GM12878 (cell line): ENCODE measurements at regions of chr3 and their contacts with region 1.

Region 1: GRCh38 chr3:46186471-46187340 is 21.4 kb downstream of the CCR1 start:
- DNase-seq: peak; percentile 87
- ATAC-seq: peak; percentile 94
- H3K4me3 ChIP-seq: 0 out of 2 replicates have a peak overlapping the region, but pooled peaks have one; percentile 6
- H3K27ac ChIP-seq: peak overlapping the region; percentile 71
- H3K4me1 ChIP-seq: peaks cover 33% of the 10 kb centered on the region
- H3K27me3 ChIP-seq: no peaks in the 10 kb centered on the region
- CTCF ChIP-seq: no peak
- EP300 ChIP-seq: peak in 1 of 2 experiments; percentile 54; a peak in 2 of 4 replicates
- POLR2A ChIP-seq: no peak
- RAD21 ChIP-seq: no peak

Region 2: DNA sequence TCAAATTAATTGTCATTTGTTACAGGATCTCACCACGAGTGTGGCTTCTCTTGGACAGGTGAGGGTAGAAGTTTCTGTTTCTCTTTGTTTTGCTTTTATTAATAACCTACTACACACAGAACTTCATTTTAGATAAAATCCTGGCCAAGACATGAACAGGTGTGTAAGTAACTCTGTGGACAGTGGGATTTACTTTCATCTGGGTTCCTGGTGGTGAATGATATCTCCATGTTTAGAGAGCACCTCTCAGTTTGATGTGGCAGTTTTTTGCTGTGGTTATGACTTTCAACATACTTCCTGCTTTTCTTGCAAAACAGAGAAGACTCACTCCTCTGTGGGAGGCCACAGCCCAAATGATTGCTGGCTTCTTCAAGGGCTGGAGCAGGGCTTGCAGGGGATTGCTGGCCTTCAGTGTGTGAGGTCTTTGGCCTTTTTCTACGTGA is 88.4 kb before region 1 on chr3:
- CTCF ChIA-PET with region 1: interaction called, 5 read pairs
- POLR2A ChIA-PET with region 1: no interaction called
- RAD21 ChIA-PET with region 1: interaction called, 4 read pairs
- SMC1A ChIA-PET with region 1: interaction called, 29 read pairs
- in situ Hi-C with region 1: no loop called
- intact Hi-C with region 1: no loop called
- DNase-seq: peak; percentile 86
- ATAC-seq: peak; percentile 78
- H3K4me3 ChIP-seq: 0 out of 2 replicates have a peak overlapping the region, but pooled peaks have one; percentile 29
- H3K27ac ChIP-seq: peak overlapping the region; percentile 94
- H3K4me1 ChIP-seq: peaks cover 60% of the 10 kb centered on the region
- H3K27me3 ChIP-seq: no peaks in the 10 kb centered on the region
- CTCF ChIP-seq: no peak
- EP300 ChIP-seq: peak; percentile 64 to 81; a peak in 3 of 4 replicates
- POLR2A ChIP-seq: peak; percentile 53; the same call in 1 of the 2 replicates
- RAD21 ChIP-seq: no peak

Region 3: GRCh38 chr3:46105306-46105919 is 81.3 kb before region 1 on chr3:
- CTCF ChIA-PET with region 1: interaction called, 5 read pairs
- POLR2A ChIA-PET with region 1: interaction called, 3 read pairs
- RAD21 ChIA-PET with region 1: interaction called, 4 read pairs
- SMC1A ChIA-PET with region 1: interaction called, 13 read pairs
- in situ Hi-C with region 1: no loop called
- intact Hi-C with region 1: loop called (anchors 2 kb)
- DNase-seq: no peak
- ATAC-seq: peak; percentile 25; the same call in 1 of the 3 replicates
- H3K4me3 ChIP-seq: no peak overlapping the region
- H3K27ac ChIP-seq: no peak overlapping the region
- H3K4me1 ChIP-seq: peaks cover 42% of the 10 kb centered on the region
- H3K27me3 ChIP-seq: no peaks in the 10 kb centered on the region
- CTCF ChIP-seq: no peak
- EP300 ChIP-seq: no peak
- POLR2A ChIP-seq: no peak
- RAD21 ChIP-seq: no peak

Region 4: DNA sequence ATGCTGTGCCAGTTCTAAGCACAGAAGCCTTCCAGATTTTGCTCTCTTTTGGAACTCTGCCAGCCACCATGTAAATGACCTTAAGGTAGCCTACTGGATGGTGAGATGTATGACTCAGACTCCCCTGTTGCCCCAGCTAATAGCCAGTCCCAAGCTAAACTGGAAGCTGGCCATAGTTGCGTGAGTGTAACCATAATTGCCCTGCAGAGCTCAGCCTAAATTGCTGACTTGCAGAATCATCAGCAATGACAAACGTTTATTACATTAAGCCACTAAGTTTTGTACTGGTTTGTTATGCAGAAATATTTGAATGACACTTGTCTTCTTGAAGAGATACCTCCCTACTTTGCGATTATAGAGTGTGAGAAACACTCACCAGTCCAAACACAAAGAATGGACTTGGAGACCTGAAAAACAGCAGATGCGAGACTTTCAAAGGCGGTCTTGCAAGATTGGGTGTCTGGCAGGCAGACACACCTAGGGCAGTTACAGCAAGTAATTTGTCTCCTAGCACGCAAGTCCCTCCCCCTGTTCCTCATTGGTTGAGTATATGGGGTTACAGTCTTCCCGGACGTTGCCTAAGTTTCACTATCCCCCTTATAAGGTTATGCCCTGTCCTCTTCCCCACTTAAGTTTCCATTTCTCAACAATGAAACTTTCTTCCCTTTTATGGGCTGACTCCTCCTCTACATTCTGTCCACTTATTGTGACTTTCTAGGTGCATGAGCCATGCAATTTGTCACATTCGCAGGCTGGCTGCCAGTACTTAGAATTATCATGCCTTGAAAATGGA is 75.8 kb before region 1 on chr3:
- CTCF ChIA-PET with region 1: interaction called, 3 read pairs
- POLR2A ChIA-PET with region 1: no interaction called
- RAD21 ChIA-PET with region 1: interaction called, 4 read pairs
- SMC1A ChIA-PET with region 1: no interaction called
- in situ Hi-C with region 1: no loop called
- intact Hi-C with region 1: loop called (anchors 2 kb)
- DNase-seq: peak; percentile 97
- ATAC-seq: peak; percentile 95
- H3K4me3 ChIP-seq: peak overlapping the region; percentile 39; the same call in 1 of the 2 replicates
- H3K27ac ChIP-seq: peak overlapping the region; percentile 99
- H3K4me1 ChIP-seq: peaks cover 40% of the 10 kb centered on the region
- H3K27me3 ChIP-seq: no peaks in the 10 kb centered on the region
- CTCF ChIP-seq: no peak
- EP300 ChIP-seq: no peak; a peak in 1 of 4 replicates
- POLR2A ChIP-seq: peak; percentile 84
- RAD21 ChIP-seq: no peak